ENCODE measurements at regions of chr7 and their contacts with region 1.

Region 1: DNA sequence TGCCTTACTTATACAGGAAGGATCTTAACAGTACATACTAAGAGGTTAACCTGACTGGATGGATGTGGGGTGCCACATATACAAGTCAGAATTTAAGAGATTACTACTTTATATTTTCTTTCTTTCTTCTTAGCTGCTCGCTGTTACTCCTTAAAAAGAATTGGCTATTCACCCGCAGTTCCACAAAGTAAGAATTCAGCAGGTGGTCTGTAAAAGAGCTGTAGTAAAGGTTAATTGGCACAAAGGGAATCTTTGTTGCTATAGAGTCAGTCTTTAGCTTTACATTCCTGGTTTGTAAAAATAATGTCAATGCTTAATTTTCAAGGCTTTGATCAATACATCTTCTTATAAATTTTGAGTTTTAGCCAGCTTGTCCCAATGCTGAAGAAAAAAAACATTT is 43.2 kb downstream of the RALA start:
- DNase-seq: no peak
- ATAC-seq: no peak
- H3K4me3 ChIP-seq: no peak overlapping the region
- H3K27ac ChIP-seq: no peak overlapping the region
- H3K4me1 ChIP-seq: no peaks in the 10 kb centered on the region
- H3K27me3 ChIP-seq: no peaks in the 10 kb centered on the region
- CTCF ChIP-seq: no peak
- EP300 ChIP-seq: no peak
- POLR2A ChIP-seq: no peak
- RAD21 ChIP-seq: no peak

Region 2: DNA sequence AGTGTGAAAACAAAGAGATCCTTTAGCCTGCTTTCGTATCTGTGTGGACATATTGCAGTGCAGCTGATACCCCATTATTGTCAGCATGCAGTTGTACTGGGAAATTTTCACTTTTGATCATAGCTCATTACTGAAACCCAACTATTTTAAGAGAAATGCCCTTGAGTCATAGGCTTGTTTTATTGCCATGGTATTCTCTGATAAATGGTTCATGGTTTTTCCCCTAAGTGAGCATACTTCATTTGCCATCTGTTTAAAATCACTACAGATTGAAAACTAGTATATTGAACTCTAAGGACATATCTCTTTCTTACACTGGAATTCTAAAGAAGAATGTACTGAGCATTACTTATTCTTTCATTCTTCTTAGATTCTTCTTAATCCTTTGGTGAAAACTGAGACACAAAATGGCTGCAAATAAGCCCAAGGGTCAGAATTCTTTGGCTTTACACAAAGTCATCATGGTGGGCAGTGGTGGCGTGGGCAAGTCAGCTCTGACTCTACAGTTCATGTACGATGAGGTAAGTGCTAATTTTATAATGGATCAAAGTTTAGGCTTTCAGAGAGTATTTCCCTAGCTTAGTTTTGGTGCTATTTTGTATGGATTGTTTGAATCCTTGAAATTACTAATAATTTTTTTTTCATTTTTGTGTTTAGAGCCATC is 19.8 kb after region 1 on chr7:
- CTCF ChIA-PET with region 1: interaction called, 4 read pairs
- POLR2A ChIA-PET with region 1: interaction called, 14 read pairs
- RAD21 ChIA-PET with region 1: no interaction called
- SMC1A ChIA-PET with region 1: interaction called, 6 read pairs
- in situ Hi-C with region 1: no loop called
- intact Hi-C with region 1: no loop called
- DNase-seq: peak; percentile 47
- ATAC-seq: peak; percentile 94
- H3K4me3 ChIP-seq: no peak overlapping the region
- H3K27ac ChIP-seq: 0 out of 2 replicates have a peak overlapping the region, but pooled peaks have one; percentile 22
- H3K4me1 ChIP-seq: peaks cover 9% of the 10 kb centered on the region
- H3K27me3 ChIP-seq: no peaks in the 10 kb centered on the region
- CTCF ChIP-seq: no peak
- EP300 ChIP-seq: 0 out of 4 replicates have a peak, but pooled peaks of 1 of the 2 experiments have one; percentile 25
- POLR2A ChIP-seq: no peak
- RAD21 ChIP-seq: no peak

Measured in GM12878 (cell line).